ENCODE measurements at regions of chr19 and their contacts with region 1.

Region 1: GRCh38 chr19:55160128-55160985 is 2.8 kb upstream of the TNNI3 start:
- DNase-seq: peak; percentile 87 to 92
- ATAC-seq: peak; percentile 97
- H3K4me3 ChIP-seq: no peak overlapping the region
- H3K4me3 Mint-ChIP-seq: peak overlapping the region; percentile 42
- H3K27ac ChIP-seq: no peak overlapping the region
- H3K27ac Mint-ChIP-seq: peak overlapping the region in 1 of 2 donors; percentile 45
- H3K4me1 ChIP-seq: peaks cover 22% of the 10 kb centered on the region
- H3K4me1 Mint-ChIP-seq: peaks cover 0 to 18% of the 10 kb centered on the region in 2 donors
- H3K27me3 ChIP-seq: peaks cover 30% of the 10 kb centered on the region
- H3K27me3 Mint-ChIP-seq: peaks cover 12 to 29% of the 10 kb centered on the region in 2 donors
- CTCF ChIP-seq: peak; percentile 89

Region 2: GRCh38 chr19:54653181-54653809 is 507.1 kb before region 1 on chr19:
- intact Hi-C with region 1: loop called (anchors 10 kb)
- DNase-seq: peak in 1 of 2 donors; percentile 53
- ATAC-seq: peak; percentile 54 to 63 (median 59)
- H3K4me3 ChIP-seq: no peak overlapping the region
- H3K4me3 Mint-ChIP-seq: no peak overlapping the region
- H3K27ac ChIP-seq: no peak overlapping the region
- H3K27ac Mint-ChIP-seq: no peak overlapping the region
- H3K4me1 ChIP-seq: no peaks in the 10 kb centered on the region
- H3K4me1 Mint-ChIP-seq: peaks cover 2 to 4% of the 10 kb centered on the region in 2 donors
- H3K27me3 ChIP-seq: peaks cover 3% of the 10 kb centered on the region
- H3K27me3 Mint-ChIP-seq: peaks cover 9 to 23% of the 10 kb centered on the region in 2 donors
- CTCF ChIP-seq: peak; percentile 77

Region 3: GRCh38 chr19:55297267-55297666 is 136.9 kb after region 1 on chr19:
- intact Hi-C with region 1: no loop called
- DNase-seq: no peak
- ATAC-seq: no peak
- H3K4me3 ChIP-seq: no peak overlapping the region
- H3K4me3 Mint-ChIP-seq: no peak overlapping the region
- H3K27ac ChIP-seq: no peak overlapping the region
- H3K27ac Mint-ChIP-seq: no peak overlapping the region
- H3K4me1 ChIP-seq: peaks cover 12% of the 10 kb centered on the region
- H3K4me1 Mint-ChIP-seq: peaks cover 0 to 12% of the 10 kb centered on the region in 2 donors
- H3K27me3 ChIP-seq: no peaks in the 10 kb centered on the region
- H3K27me3 Mint-ChIP-seq: no peaks in the 10 kb centered on the region
- CTCF ChIP-seq: no peak